ENCODE measurements at regions of chr15 and their contacts with region 1.

Region 1: DNA sequence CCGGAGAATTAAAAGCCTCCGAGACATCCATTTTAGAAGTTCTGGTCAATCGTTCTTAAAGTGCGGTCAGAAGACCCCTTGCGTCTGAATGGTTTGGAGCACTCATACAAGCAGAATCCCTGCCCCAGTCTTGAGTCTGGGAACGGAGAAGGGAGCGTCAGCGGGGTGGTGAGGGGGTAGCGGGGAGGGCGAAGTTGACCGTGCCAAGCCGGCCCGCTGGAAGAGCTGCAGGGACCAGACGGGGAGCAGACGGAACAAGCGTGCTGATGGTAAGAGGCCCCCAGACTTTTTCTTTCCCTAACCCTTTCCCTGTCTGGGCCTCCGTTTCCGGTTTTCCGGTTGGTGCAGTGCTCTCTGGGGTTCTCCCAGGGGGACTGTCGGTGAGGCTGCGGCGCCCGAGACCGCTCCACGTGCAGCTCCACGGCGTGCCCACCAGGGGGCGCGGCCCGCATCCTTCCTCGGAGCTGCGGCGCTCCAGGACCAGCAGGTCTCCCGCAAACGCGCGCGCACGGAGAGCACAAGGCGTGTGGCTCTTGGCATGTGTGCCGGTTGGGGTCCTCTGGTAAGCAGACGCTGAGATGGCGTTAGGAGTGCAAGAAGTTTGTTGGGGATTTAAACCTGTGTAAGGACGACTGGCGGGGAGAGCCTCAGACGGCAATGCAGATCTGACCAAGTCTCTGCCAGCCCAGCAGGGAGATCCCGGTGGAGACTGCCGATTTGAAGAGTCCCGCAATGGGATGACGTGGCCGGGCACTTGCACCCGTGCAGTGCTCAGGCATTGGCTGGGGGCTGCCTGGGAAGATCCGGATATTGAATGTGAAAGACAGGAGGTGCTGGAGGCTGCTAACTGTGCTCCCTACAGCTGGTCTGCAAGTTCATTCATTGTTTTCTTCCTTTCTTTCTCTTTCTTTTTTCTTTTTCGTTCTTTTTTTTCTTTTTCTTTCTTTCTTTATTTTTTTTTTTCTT is 19.2 kb upstream of the CORO2B start:
- DNase-seq: peak; percentile 86
- ATAC-seq: peak; percentile 96
- H3K4me3 ChIP-seq: peak overlapping the region; percentile 33 to 58 (median 49)
- H3K4me3 Mint-ChIP-seq: peak overlapping the region; percentile 91
- H3K27ac ChIP-seq: no peak overlapping the region
- H3K27ac Mint-ChIP-seq: peak overlapping the region; percentile 46
- H3K4me1 ChIP-seq: peaks cover 25 to 34% of the 10 kb centered on the region in 2 donors
- H3K4me1 Mint-ChIP-seq: peaks cover 23% of the 10 kb centered on the region
- H3K27me3 ChIP-seq: peaks cover 0 to 30% (median 6%) of the 10 kb centered on the region in 4 experiments
- H3K27me3 Mint-ChIP-seq: peaks cover 43% of the 10 kb centered on the region
- CTCF ChIP-seq: peak; percentile 95

Region 2: GRCh38 chr15:68578174-68578979 is 18.7 kb after region 1 on chr15:
- CTCF ChIA-PET with region 1: interaction called, 23 read pairs
- POLR2A ChIA-PET with region 1: no interaction called
- intact Hi-C with region 1: loop called (anchors 1 kb)
- DNase-seq: peak; percentile 80
- ATAC-seq: peak; percentile 72
- H3K4me3 ChIP-seq: peak overlapping the region; percentile 54 to 77 (median 67)
- H3K4me3 Mint-ChIP-seq: peak overlapping the region; percentile 93
- H3K27ac ChIP-seq: peak overlapping the region; percentile 72 to 75
- H3K27ac Mint-ChIP-seq: peak overlapping the region; percentile 78
- H3K4me1 ChIP-seq: peaks cover 31 to 35% of the 10 kb centered on the region in 2 donors
- H3K4me1 Mint-ChIP-seq: peaks cover 44% of the 10 kb centered on the region
- H3K27me3 ChIP-seq: peaks cover 0 to 22% (median 3%) of the 10 kb centered on the region in 4 experiments
- H3K27me3 Mint-ChIP-seq: peaks cover 32% of the 10 kb centered on the region
- CTCF ChIP-seq: peak; percentile 49

Region 3: DNA sequence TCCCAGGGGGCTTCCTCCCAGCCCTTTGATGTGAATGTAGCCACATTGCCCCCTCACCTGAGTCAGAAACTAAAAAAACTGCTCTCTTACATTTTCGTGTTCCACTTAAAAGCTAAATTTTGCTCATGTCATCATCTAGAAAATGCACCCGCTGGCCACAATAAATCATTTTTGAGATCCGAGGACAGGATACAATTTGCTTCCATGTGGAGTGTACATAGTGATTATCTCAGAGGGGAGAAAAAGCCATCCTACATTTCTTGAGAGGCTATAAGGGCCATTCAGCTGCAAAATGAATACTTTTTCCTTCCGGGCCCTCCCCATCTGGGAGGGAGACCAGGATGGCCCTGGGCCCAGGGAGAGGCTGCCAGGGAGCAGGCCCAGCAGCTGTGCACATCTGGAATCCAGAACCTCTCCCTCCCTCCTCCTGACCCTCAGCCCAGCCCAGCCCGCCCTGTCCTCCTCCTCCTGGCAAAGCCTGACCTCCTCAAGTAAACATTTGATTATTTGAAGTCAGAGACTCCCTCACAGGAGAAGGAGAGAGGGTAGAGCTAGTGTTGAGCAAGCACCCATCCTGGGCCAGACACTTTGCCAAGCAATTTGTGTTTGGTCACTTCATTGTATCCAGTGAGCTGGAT is 78.3 kb after region 1 on chr15:
- CTCF ChIA-PET with region 1: interaction called, 46 read pairs
- POLR2A ChIA-PET with region 1: no interaction called
- intact Hi-C with region 1: loop called (anchors 5 kb)
- DNase-seq: no peak
- ATAC-seq: no peak
- H3K4me3 ChIP-seq: no peak overlapping the region
- H3K4me3 Mint-ChIP-seq: no peak overlapping the region
- H3K27ac ChIP-seq: peak overlapping the region in 1 of 2 donors; percentile 1
- H3K27ac Mint-ChIP-seq: peak overlapping the region; percentile 13
- H3K4me1 ChIP-seq: peaks cover 43 to 49% of the 10 kb centered on the region in 2 donors
- H3K4me1 Mint-ChIP-seq: peaks cover 66% of the 10 kb centered on the region
- H3K27me3 ChIP-seq: no peaks in the 10 kb centered on the region
- H3K27me3 Mint-ChIP-seq: no peaks in the 10 kb centered on the region
- CTCF ChIP-seq: no peak

Region 4: DNA sequence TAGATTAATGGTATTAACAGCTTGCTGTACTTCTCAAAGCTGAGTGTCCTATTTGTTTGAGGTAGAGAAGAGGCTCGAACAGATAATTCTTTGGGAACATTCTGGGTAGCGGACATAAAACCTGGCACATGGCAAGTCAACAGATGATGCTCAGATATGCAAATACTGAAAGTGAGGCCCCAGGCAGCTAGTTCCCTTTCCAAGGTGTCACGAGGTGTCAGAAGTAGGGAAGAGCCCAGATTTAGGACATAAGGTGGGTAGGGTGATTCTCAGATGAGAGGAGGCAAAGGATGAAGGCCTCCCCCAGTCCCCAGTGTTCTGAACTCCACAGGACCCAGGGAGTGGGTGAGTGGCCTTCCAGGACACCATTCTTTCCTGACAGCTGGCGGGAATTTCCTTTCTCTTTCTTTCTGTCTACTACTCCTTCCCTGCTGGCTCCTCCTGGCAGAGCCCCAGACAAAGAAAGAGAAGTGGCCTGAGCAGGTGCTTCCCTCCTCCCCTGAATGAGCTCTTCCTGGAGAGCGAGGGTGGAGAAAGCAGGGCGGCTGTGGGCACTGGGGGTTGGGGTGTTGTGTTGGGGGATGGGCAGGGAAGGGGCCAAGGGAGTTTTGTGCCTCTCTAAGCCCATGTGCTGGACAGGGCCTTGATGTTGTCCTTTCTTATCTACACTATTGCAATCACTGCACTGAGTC is 106.6 kb after region 1 on chr15:
- CTCF ChIA-PET with region 1: interaction called, 409 read pairs
- POLR2A ChIA-PET with region 1: no interaction called
- intact Hi-C with region 1: no loop called
- DNase-seq: no peak
- ATAC-seq: no peak
- H3K4me3 ChIP-seq: no peak overlapping the region
- H3K4me3 Mint-ChIP-seq: no peak overlapping the region
- H3K27ac ChIP-seq: no peak overlapping the region
- H3K27ac Mint-ChIP-seq: no peak overlapping the region
- H3K4me1 ChIP-seq: peaks cover 9 to 10% of the 10 kb centered on the region in 2 donors
- H3K4me1 Mint-ChIP-seq: peaks cover 8% of the 10 kb centered on the region
- H3K27me3 ChIP-seq: no peaks in the 10 kb centered on the region
- H3K27me3 Mint-ChIP-seq: no peaks in the 10 kb centered on the region
- CTCF ChIP-seq: no peak

Region 5: DNA sequence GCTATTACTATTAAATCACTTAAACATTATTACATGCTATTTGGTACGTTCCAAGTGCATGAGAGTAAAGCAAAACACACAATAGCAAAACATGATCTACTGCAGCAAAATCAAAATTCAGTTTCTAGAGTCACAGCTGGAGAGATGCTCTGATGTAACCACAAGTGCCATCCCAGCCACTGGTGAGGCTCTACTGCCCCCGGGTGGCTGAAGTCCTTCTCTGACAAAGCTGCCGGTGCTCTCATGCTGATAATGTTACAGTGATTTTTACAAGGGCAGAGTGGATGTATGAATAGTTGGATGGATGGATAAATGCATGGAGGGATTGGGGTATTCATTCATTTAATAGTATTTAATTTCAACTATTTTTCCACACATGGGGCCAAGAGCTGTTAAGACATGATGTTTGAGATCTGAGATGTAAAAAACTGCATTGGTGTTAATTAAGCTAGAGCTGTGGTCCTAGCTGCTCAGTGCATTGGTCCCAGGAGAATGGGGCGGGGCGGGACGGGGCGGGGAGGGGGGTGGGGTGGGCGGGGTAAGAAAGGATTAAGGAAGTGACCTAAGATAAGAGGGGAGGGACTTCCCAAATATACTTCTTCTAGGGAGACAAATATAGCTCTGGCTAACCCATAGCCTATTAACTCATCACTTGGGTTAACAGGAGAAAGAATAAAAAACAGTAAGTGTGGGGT is 365.4 kb after region 1 on chr15:
- CTCF ChIA-PET with region 1: interaction called, 10 read pairs
- POLR2A ChIA-PET with region 1: no interaction called
- intact Hi-C with region 1: no loop called
- DNase-seq: peak; percentile 61
- ATAC-seq: peak; percentile 41
- H3K4me3 ChIP-seq: no peak overlapping the region
- H3K4me3 Mint-ChIP-seq: no peak overlapping the region
- H3K27ac ChIP-seq: no peak overlapping the region
- H3K27ac Mint-ChIP-seq: no peak overlapping the region
- H3K4me1 ChIP-seq: no peaks in the 10 kb centered on the region
- H3K4me1 Mint-ChIP-seq: peaks cover 3% of the 10 kb centered on the region
- H3K27me3 ChIP-seq: no peaks in the 10 kb centered on the region
- H3K27me3 Mint-ChIP-seq: peaks cover 9% of the 10 kb centered on the region
- CTCF ChIP-seq: peak; percentile 76